Heart left ventricle (tissue), 16 donors: ENCODE measurements at regions of chr17 and their contacts with region 1.

Region 1: DNA sequence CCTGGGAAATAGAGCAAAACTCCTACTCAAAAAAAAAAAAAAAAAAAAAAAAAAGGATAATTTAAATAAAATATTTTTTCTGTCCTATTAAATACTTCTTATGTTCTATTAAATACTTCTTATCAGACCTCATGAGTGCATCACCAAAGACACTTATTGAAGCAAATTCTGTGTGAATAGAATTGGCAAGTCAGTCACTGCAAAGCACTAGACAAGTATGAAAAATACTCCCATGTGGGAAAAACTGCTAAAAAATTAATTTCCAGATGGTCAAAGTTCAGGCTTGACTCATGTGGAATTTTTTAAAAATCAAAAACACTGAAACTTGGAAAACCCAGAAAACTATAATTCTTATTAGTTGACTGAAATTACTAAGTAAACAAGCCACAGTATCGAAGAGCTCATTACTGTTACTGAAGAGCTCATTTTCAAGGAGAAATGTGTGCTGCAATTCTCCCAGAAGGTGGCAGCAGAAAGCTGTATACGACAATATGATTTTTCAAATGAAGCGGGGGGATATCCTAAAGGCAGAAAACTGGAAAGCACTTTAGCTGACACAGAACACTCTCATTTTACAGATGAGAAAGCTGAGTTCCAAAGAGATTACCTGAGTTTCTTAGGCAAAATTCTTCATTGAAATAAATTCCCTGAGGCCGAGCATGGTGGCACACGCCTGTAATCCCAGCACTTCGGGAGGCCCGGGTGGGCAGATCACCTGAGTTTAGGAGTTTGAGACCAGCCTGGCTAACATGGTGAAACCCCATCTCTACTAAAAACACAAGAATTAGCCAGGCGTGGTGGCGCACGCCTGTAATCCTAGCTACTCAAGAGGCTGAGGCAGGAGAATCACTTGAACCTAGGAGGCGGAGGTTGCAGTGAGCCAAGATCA is 15.9 kb upstream of the FBXO47 start:
- DNase-seq: peak in 3 of 5 donors; percentile 39 to 54 (median 42)
- ATAC-seq: peak in 3 of 4 donors; percentile 69 to 79 (median 76)
- H3K4me3 ChIP-seq: no peak overlapping the region
- H3K27ac ChIP-seq: peak overlapping the region in 5 of 12 donors; percentile 8 to 75 (median 59)
- H3K4me1 ChIP-seq: peaks cover 0 to 19% (median 0%) of the 10 kb centered on the region in 12 donors
- H3K27me3 ChIP-seq: no peaks in the 10 kb centered on the region
- CTCF ChIP-seq: peak; percentile 66 to 88 (median 82)
- POLR2A ChIP-seq: no peak

Region 2: GRCh38 chr17:38454516-38454915 is 528.6 kb before region 1 on chr17:
- intact Hi-C with region 1: no loop called
- DNase-seq: peak; percentile 88 to 95 (median 90)
- ATAC-seq: peak; percentile 83 to 87 (median 86)
- H3K4me3 ChIP-seq: peak overlapping the region in 11 of 12 donors; percentile 38 to 64 (median 54)
- H3K27ac ChIP-seq: peak overlapping the region; percentile 49 to 95 (median 88)
- H3K4me1 ChIP-seq: peaks cover 15 to 96% (median 75%) of the 10 kb centered on the region in 12 donors
- H3K27me3 ChIP-seq: peaks cover 0 to 16% (median 0%) of the 10 kb centered on the region in 9 donors
- CTCF ChIP-seq: no peak
- POLR2A ChIP-seq: peak in 1 of 2 donors; percentile 29

Region 3: GRCh38 chr17:39026980-39027451 is 43.9 kb after region 1 on chr17:
- intact Hi-C with region 1: no loop called
- DNase-seq: peak; percentile 75 to 90 (median 81)
- ATAC-seq: peak; percentile 81 to 95 (median 93)
- H3K4me3 ChIP-seq: peak overlapping the region; percentile 13 to 60 (median 52)
- H3K27ac ChIP-seq: peak overlapping the region in 9 of 12 donors; percentile 12 to 75 (median 62)
- H3K4me1 ChIP-seq: peaks cover 0 to 14% (median 5%) of the 10 kb centered on the region in 12 donors
- H3K27me3 ChIP-seq: peaks cover 0 to 8% (median 0%) of the 10 kb centered on the region in 9 donors
- CTCF ChIP-seq: peak in 2 of 12 donors; percentile 5 to 21
- POLR2A ChIP-seq: no peak

Region 4: DNA sequence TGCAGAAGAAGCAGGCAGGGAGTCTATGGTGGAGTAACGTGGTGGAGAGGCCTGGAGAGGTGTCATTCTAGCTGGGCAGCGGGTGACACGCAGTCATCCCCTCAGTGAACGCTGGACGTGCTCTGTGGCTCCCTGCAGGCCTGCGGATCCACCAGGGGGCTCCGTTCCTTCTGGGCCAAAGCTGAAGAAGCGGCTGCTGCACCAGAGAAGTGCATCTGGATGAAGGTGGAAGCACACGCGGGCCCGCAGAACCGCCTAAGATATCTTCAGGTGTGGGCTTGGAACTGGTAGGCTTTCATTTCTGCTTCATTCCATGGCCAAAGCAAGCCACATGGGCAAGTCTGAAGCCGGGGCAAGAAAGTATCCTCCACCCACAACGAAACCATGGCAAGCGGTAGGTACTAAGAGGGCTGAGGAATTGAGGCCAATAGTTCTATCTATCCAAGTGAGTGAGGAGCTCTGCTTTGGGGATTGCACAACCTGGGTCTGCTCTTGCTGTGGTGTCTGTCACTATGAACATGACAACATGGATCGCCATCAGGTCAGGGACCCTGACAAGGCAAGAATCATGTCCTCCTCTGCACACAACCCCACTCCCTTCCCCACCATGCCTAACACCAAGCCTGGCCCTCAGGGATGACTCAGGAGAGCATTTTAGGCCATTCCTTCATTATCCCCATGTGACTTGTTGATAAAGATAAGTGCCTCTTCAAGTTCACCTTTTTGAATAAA is 63.0 kb after region 1 on chr17:
- intact Hi-C with region 1: no loop called
- DNase-seq: no peak
- ATAC-seq: no peak
- H3K4me3 ChIP-seq: no peak overlapping the region
- H3K27ac ChIP-seq: no peak overlapping the region
- H3K4me1 ChIP-seq: no peaks in the 10 kb centered on the region
- H3K27me3 ChIP-seq: no peaks in the 10 kb centered on the region
- CTCF ChIP-seq: no peak
- POLR2A ChIP-seq: no peak

Region 5: DNA sequence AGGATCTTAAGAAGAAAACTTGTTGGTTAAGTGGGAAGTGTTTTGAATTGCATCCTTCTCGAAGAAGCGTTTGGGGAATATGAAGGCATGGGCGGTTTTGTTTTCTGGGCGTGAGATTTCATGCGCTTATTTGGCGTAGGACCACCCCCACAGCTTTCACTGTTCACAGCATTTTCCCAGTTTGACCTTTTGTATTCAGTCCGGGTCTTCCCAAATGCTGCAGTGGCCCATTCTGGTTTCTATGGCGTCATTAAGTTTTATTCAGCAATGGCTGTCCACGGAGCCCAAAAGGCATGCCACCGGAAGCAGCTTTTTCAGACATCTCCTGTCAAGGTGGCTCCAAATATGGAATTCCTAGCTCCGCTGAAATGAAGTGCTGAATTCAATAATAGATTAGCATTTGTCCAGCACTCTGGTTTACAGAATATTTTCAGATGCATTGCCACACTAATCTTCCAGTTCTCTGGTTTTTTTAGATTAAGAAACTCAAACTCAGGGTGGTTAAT is 74.7 kb after region 1 on chr17:
- intact Hi-C with region 1: loop called in 2 of 10 experiments (anchors 5 to 10 kb)
- DNase-seq: no peak
- ATAC-seq: no peak
- H3K4me3 ChIP-seq: peak overlapping the region in 11 of 12 donors; percentile 31 to 71 (median 63)
- H3K27ac ChIP-seq: peak overlapping the region in 4 of 12 donors; percentile 41 to 77 (median 68)
- H3K4me1 ChIP-seq: peaks cover 0 to 35% (median 6%) of the 10 kb centered on the region in 12 donors
- H3K27me3 ChIP-seq: no peaks in the 10 kb centered on the region
- CTCF ChIP-seq: no peak
- POLR2A ChIP-seq: no peak

Region 6: DNA sequence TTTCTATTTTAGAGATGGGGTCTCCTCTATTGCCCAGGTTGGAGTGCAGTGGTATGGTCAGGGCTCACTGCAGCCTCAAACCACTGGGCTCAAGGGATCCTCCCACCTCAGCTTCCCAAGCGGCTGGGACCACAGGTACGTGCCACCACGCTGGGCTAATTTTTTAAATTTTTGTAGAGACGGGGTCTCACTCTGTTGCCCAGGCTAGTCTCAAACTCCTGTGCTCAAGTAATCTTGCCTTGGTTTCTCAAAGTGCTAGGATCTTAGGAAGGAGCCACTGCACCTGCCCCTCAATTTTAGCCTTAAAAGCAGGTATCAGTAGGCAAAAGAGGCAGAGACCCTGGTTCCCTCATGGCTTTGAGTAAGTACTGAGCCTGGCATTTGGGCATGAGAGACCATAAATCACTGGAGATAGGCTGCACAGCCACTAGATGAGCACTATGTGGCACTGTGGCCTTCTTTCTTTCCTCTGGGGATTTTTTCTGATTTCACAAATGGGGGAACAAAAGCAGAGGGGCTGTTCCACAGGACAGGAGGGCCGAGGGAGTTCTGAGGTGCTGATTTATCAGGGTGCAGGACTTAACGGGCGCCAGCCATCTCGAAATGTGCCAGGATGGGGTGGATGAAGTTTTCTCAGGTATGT is 86.1 kb after region 1 on chr17:
- intact Hi-C with region 1: loop called in 2 of 10 experiments (anchors 5 to 10 kb)
- DNase-seq: no peak
- ATAC-seq: peak; percentile 36 to 65 (median 62)
- H3K4me3 ChIP-seq: no peak overlapping the region
- H3K27ac ChIP-seq: no peak overlapping the region
- H3K4me1 ChIP-seq: peaks cover 0 to 7% (median 0%) of the 10 kb centered on the region in 12 donors
- H3K27me3 ChIP-seq: no peaks in the 10 kb centered on the region
- CTCF ChIP-seq: peak; percentile 44 to 68 (median 54)
- POLR2A ChIP-seq: no peak

Region 7: GRCh38 chr17:39174907-39175694 is 192.0 kb after region 1 on chr17:
- intact Hi-C with region 1: loop called in 3 of 10 experiments (anchors 5 kb)
- DNase-seq: peak; percentile 75 to 89 (median 79)
- ATAC-seq: peak; percentile 34 to 86 (median 75)
- H3K4me3 ChIP-seq: peak overlapping the region in 6 of 12 donors; percentile 6 to 38 (median 17)
- H3K27ac ChIP-seq: no peak overlapping the region
- H3K4me1 ChIP-seq: peaks cover 0 to 13% (median 2%) of the 10 kb centered on the region in 12 donors
- H3K27me3 ChIP-seq: no peaks in the 10 kb centered on the region
- CTCF ChIP-seq: peak; percentile 69 to 95 (median 90)
- POLR2A ChIP-seq: no peak